A673 (cell line): ENCODE measurements at regions of chr21 and their contacts with region 1.

Region 1: GRCh38 chr21:38712071-38712470 is 93.7 kb upstream of the ETS2 start:
- DNase-seq: peak; percentile 21
- H3K4me3 ChIP-seq: no peak overlapping the region
- H3K27ac ChIP-seq: no peak overlapping the region
- H3K4me1 ChIP-seq: no peaks in the 10 kb centered on the region
- H3K27me3 ChIP-seq: no peaks in the 10 kb centered on the region
- CTCF ChIP-seq: peak; percentile 44

Region 2: DNA sequence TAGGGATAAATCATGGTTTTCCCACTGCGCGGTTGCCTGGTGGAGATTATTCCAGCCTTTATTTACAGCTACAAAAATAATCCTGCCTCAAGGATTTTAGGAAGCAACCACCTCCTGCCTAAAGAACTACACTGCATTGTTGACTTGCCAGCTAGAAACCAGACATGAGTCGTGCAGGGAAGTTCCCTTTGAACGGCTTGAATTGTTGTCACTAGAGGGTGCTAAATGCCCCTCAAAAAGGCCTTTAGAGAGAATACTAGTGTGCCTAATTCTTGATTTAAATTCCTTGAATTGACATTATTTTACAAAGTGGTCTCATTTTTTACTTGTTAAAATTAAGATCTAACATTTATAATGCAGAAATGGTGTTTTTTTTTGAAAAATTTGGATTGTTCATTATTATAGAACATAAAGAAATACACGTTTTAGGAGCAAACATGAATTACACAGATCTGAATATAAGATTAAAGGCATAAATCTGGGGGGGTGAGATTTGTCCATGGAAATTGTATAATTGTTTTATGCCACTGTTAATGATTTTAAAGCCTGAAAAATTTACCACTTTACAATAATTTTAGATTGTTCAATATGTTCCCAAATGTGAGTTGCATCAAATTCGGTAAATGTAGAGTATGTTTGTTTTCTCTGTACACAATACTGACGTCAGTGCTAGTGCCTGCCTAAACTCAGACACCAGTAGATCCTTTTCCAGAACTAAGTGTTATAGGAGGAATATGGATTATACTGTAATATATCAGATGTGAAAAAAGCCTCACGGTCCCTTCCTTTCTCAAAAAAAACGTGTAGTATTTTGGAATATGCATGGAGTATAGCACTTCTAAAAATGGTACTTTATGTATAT is 206.2 kb before region 1 on chr21:
- CTCF ChIA-PET with region 1: no interaction called
- POLR2A ChIA-PET with region 1: no interaction called
- intact Hi-C with region 1: loop called (anchors 10 kb)
- DNase-seq: peak; percentile 68
- H3K4me3 ChIP-seq: no peak overlapping the region
- H3K27ac ChIP-seq: no peak overlapping the region
- H3K4me1 ChIP-seq: no peaks in the 10 kb centered on the region
- H3K27me3 ChIP-seq: peaks cover 5% of the 10 kb centered on the region
- CTCF ChIP-seq: peak; percentile 67

Region 3: GRCh38 chr21:38743761-38744529 is 31.9 kb after region 1 on chr21:
- CTCF ChIA-PET with region 1: no interaction called
- POLR2A ChIA-PET with region 1: interaction called, 11 read pairs
- intact Hi-C with region 1: no loop called
- DNase-seq: peak; percentile 75
- H3K4me3 ChIP-seq: peak overlapping the region; percentile 20
- H3K27ac ChIP-seq: no peak overlapping the region
- H3K4me1 ChIP-seq: peaks cover 9% of the 10 kb centered on the region
- H3K27me3 ChIP-seq: no peaks in the 10 kb centered on the region
- CTCF ChIP-seq: no peak